Activated CD4-positive, alpha-beta memory T cell treated with anti-CD3 and anti-CD28 coated beads, Interleukin-2, amount 10 ng/mL, durations not matched to agents 7 days and 5 days (primary cell): ENCODE measurements at regions of chr3 and their contacts with region 1.

Region 1: DNA sequence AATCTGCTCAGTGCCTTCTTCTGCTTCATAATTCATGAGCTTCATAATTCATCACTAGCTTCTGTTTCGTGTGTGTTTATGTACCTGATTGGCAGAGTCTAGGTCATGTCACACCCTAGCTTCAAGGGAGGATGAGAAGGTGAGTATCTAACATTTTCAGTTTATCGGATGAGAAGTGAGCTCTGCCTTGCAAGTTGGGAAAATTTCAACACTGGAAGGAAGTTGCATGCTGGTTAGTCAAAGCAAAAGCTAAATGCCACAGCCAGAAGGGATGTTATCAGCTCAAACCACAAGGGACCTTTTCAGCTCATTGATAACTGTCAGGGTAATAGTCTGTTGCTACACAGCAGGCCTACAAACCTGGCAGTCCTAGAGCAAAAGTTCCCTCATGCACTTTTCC is 7.3 kb upstream of the TNFSF10 start:
- DNase-seq: peak; percentile 49
- H3K4me3 Mint-ChIP-seq: peak overlapping the region; percentile 31
- H3K27ac Mint-ChIP-seq: peak overlapping the region; percentile 88
- H3K4me1 Mint-ChIP-seq: peaks cover 40% of the 10 kb centered on the region
- H3K27me3 Mint-ChIP-seq: no peaks in the 10 kb centered on the region

Region 2: GRCh38 chr3:172511783-172512762 is 18.5 kb before region 1 on chr3:
- CTCF ChIA-PET with region 1: interaction called, 12 read pairs
- POLR2A ChIA-PET with region 1: interaction called, 60 read pairs
- DNase-seq: peak; percentile 79
- H3K4me3 Mint-ChIP-seq: peak overlapping the region; percentile 52
- H3K27ac Mint-ChIP-seq: peak overlapping the region; percentile 87
- H3K4me1 Mint-ChIP-seq: peaks cover 83% of the 10 kb centered on the region
- H3K27me3 Mint-ChIP-seq: no peaks in the 10 kb centered on the region

Region 3: DNA sequence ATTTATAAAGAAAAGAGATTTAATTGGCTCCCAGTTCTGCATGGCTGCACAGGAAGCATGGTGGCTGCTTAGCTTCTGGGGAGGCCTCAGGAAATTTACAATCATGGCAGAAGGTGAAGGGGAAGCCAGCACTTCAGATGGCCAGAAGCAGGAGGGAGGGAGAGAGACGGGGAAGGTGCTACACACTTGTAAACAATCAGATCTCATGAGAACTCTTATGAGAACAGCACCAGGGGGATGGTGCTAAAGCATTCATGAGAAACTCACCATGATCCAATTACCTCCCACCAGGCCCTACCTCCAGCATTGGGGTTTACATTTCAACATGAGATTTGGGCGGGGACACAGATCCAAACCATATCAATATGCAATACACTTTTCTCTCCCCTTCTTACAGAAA is 293.7 kb after region 1 on chr3:
- CTCF ChIA-PET with region 1: no interaction called
- POLR2A ChIA-PET with region 1: no interaction called
- DNase-seq: no peak
- H3K4me3 Mint-ChIP-seq: no peak overlapping the region
- H3K27ac Mint-ChIP-seq: no peak overlapping the region
- H3K4me1 Mint-ChIP-seq: no peaks in the 10 kb centered on the region
- H3K27me3 Mint-ChIP-seq: no peaks in the 10 kb centered on the region